WTC11 (cell line): ENCODE measurements at regions of chr7 and their contacts with region 1.

Region 1: DNA sequence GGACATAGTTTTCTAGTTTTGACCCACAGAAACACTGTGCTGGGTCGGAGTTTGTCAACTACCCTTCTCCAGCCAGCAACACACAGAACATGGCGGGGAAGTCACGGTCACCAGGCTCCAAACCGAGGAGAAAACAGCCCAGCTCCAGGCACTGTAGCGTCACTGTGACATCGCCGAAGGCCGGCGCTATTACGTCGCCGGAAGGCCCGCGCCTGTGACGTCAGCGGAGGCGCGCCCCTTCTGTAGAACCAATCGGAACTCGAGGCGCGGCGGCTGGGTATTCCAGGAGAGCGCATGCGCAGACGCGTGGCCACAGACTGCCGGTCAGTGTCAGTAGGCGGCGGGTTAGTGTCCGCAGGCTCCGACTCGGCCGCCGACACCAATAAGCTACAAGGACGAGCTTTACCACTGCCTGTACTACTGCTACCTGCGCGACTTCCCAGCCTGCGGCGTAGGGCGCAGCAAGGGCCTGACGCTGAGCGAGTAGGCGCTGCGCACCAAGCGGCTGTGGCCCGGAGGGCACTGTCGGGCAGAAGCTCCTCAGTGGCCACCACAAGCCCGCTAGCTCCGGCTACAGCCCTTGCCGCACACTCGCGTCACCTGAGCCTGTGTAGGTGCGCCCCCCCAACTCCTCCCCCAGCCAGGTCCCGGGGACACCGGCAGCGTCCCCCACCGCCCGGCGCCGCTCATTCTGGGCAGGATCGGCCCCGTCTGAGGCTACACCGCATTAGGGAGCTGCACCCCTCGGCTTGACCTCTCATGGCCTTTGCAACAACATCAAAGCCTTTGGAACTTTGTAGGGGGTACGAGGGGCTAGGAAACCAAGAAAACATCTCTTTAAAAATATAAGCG is 35.1 kb upstream of the SRRM3 start:
- DNase-seq: peak; percentile 98
- ATAC-seq: peak; percentile 70
- H3K4me3 Mint-ChIP-seq: peak overlapping the region; percentile 70
- H3K27ac Mint-ChIP-seq: peak overlapping the region; percentile 99
- H3K4me1 Mint-ChIP-seq: peaks cover 35% of the 10 kb centered on the region
- H3K27me3 Mint-ChIP-seq: no peaks in the 10 kb centered on the region
- CTCF ChIP-seq: no peak

Region 2: DNA sequence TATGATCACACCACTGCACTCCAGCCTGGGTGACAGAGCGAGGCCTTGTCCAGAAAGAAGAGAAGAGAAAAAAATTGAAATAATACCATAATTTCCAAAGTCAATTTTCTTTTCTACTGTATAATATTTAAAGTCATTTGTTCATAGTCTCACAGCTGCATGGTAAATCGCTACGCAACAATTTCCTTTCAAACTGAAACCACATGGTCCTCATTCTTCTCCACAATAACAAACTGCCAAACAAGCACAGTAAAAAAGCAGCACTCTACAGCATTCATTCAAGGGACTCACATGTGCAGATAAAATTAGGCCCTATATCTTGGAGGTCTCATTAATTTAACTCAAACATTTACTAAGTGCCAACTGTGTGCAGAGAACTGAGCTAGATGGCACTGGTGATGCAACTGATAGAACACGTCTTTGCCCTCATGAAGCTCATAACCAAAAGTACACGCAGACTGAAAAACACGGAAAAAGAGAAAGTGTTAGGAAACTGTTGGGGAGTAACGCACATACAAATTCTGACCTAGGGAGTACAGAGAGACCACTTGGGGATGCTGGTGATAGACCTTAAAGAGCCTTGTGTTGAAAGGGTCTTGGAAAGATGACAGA is 33.4 kb before region 1 on chr7:
- CTCF ChIA-PET with region 1: no interaction called
- POLR2A ChIA-PET with region 1: no interaction called
- DNase-seq: no peak
- ATAC-seq: no peak
- H3K4me3 Mint-ChIP-seq: no peak overlapping the region
- H3K27ac Mint-ChIP-seq: no peak overlapping the region
- H3K4me1 Mint-ChIP-seq: no peaks in the 10 kb centered on the region
- H3K27me3 Mint-ChIP-seq: no peaks in the 10 kb centered on the region
- CTCF ChIP-seq: no peak

Region 3: DNA sequence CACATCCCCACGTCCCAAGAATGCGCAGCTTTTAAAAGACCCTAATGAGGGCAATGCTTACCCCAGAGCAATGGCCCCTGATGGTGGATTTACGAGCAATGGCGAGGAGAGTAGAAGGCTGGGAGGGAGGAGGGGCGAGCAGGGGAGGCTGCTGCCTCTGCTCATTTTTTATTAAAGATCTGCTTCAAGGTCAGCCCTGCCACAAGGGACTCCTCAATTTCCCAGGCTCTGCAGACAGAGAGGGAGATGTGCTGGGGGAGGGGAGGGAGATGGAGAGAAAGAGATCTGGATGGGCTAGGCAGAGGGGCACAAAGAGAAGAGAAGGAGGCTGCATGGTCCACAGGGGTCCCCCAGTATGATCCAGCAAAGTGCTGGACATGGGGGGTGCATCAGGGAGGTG is 27.3 kb after region 1 on chr7:
- CTCF ChIA-PET with region 1: no interaction called
- POLR2A ChIA-PET with region 1: interaction called, 10 read pairs
- DNase-seq: no peak
- ATAC-seq: no peak
- H3K4me3 Mint-ChIP-seq: no peak overlapping the region
- H3K27ac Mint-ChIP-seq: peak overlapping the region; percentile 14; the same call in 1 of the 2 replicates
- H3K4me1 Mint-ChIP-seq: peaks cover 33% of the 10 kb centered on the region
- H3K27me3 Mint-ChIP-seq: no peaks in the 10 kb centered on the region; the same call in 1 of the 2 replicates
- CTCF ChIP-seq: no peak